ENCODE measurements at regions of chr6 and their contacts with region 1.

Region 1: DNA sequence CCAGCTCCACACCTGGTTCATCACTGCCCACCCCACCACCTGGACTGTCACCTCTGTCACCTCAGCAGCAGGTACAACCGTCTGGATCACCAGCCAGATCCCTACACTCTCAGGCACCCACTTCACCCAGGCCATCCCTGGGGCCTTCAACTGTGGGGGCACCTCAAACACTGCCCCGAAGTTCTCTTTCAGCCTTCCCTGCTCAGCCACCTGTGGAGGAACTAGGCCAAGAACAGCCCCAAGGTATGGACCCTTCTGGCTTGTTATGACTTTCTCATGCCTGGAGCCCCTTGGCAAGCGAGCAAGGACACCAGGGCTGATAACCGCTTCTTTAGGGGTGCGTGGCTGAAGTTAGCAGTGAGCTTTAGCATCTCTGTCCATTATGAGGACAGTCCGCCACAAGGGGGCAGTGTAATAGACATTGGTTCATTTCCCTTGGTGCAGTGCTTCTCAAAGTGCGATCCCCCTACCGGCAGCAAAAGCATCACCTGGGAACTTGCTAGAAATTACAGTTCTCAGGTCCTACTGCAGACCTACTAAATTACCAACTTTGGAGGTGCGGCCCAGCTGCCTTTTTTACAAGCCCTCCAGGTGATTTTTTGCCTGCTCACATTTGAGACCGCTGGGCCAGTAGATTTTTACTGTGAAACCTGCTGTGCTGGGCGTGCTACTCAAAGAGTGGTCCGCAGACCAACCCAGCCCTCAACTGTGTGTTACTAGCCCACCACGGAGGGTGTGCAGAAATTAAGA is 32.5 kb downstream of the PNPLA1 start:
- DNase-seq: peak; percentile 89
- CTCF ChIP-seq: peak; percentile 87

Region 2: GRCh38 chr6:36280467-36280866 is 21.9 kb before region 1 on chr6:
- CTCF ChIA-PET with region 1: interaction called, 24 read pairs
- POLR2A ChIA-PET with region 1: no interaction called
- DNase-seq: no peak
- CTCF ChIP-seq: no peak

Region 3: GRCh38 chr6:36314221-36315014 is 12.0 kb after region 1 on chr6:
- CTCF ChIA-PET with region 1: interaction called, 28 read pairs
- POLR2A ChIA-PET with region 1: no interaction called
- DNase-seq: no peak
- CTCF ChIP-seq: no peak

Region 4: DNA sequence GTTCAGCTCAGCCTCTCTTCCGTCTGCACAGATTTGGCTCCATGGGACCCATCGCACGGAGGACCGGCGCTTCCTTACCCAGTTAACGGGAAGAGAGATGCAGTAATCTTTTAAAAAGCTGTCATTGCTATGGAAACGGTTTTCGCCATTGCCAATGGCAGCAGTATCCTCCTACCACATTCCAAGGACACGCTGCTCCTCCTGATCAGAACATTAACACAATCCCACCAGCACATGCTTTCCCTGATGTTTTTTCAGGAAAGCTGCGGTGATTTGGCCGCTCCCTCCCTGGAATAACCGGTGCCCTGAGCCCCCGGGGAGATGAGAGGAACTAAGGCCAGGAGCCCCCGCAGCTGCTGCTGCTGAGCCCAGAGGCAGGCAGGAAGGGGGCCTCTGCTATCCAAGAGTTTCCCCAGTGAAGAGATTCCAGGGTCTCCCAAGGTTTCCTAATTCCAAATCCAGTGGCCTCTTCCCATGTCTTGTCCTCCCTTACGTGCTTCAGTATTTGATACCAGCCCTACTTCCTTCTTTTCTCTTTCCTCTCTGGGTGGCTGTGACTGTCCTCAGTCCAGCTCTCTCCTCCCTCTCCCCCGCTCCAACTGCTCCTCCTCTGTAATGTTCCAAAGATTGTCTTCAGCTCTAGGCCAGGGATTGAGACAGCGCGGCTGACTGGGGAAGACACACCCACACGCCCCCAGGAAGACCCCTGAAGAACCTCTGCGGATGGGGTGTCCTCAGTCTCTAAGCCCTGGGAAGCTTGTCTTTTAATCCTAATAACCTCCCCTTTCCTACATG is 31.7 kb after region 1 on chr6:
- CTCF ChIA-PET with region 1: interaction called, 16 read pairs
- POLR2A ChIA-PET with region 1: no interaction called
- DNase-seq: no peak
- CTCF ChIP-seq: no peak

Region 5: DNA sequence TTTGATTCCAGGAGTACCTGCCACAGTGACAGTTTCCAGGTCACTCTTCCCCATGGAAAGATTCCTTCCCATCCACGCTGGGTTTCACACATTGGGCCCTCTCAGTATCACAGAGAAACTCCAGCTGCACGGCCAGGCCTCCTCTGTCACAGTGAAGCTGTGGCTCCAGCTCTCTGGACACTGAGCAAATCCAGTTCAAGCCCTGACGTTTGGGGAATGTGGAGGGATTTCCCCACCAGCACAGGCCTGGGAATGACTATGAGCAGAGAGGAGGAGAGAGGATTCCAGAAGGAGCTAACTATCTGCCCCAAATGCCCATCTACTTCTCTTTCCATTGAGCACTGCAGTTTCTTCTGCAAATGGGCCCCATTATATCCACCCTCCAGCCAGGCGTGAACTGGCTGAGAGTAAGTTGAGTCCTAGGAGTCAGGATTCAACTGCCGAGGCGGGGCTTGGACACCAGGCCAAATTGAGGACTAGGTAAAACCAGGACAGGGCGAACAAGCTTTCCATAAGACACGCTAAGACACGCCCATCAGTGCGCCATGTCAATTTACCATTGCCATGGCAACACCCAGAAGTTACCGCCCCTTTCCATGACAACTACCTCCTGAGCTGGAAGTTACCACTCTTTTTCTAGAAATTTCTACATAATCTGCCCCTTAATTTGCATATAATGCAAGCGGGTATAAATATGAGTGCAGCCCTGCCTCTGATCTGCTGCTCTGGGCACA is 43.4 kb after region 1 on chr6:
- CTCF ChIA-PET with region 1: interaction called, 14 read pairs
- POLR2A ChIA-PET with region 1: no interaction called
- DNase-seq: no peak
- CTCF ChIP-seq: no peak

Region 6: DNA sequence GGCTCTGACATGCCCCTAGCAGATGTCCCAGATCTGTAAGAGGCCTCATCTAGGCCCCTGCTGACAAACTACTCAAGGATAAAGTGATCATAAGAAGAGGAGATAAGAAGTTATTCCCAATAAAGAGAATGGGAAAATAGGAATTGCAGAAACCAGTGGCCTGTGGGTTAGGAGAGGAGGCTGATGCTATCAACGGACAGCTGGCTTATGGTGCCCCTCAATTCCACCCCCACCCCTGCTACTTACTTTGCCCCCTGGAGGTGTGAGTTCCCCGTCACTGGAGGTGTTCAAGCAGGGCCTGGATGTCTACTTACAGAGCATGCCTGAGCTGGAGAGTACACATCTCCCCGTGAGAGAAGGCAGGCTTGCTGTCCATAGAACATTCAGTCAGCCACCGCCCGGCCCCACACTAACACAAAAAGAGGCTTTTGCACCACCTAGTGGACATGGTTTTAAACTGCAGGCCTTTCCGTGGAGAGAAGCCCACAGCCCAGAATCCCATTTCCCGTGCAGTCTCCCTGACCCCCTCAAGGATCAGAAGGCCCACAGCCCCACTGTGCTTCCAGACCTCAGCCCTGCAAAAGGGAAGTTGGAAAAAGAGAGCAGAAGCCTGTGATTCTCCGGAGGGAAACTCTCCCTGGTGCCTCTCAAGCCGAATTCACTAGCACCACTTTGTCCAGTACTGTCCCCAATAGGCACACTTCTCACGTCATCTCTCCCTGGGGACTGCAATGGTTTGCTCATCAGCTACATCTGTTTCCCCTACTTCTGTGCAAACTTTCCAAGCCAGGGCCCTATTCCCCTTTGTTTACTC is 58.0 kb after region 1 on chr6:
- CTCF ChIA-PET with region 1: interaction called, 227 read pairs
- POLR2A ChIA-PET with region 1: no interaction called
- DNase-seq: peak; percentile 78
- CTCF ChIP-seq: peak; percentile 81

Region 7: DNA sequence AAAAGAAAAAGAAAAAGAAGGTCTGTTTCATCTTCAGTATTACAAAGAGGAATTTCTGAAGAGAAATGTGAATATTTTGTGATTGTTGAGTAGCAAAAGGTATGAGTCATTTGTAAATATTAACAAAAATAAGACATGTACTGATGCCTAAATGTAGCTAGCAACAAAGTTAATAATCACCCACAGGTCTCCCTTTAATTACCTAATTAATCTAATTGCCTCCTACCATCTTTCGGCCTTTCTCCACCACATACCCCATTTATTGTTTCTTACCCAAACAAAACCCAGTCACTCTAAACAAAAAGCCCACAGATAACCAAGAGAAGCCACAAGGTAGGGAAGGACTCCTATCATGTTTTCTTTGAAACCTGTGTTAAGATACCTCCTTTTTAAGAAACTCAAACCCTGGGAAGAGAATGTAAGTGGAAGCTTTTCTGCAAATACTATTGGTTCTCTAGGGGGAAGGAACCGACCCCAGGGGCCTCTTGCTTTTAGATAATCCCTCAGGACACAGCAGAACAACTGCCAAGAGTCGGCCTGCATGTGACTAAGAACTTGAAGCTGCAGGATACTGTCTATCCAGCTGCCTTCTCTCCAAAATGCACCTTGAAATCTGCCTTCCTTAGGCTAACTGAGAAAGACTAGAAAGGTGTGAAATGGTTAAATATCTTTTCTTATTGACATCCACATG is 261.0 kb after region 1 on chr6:
- CTCF ChIA-PET with region 1: no interaction called
- POLR2A ChIA-PET with region 1: no interaction called
- DNase-seq: no peak
- CTCF ChIP-seq: no peak